CD8-positive, alpha-beta T cell (primary cell): ENCODE measurements at regions of chr16 and their contacts with region 1.

Region 1: GRCh38 chr16:87387942-87388817 is 4.0 kb upstream of the MAP1LC3B start:
- DNase-seq: peak; percentile 76 to 97 (median 86)
- ATAC-seq: peak; percentile 65
- H3K4me3 ChIP-seq: peak overlapping the region; percentile 4 to 13
- H3K4me3 Mint-ChIP-seq: peak overlapping the region; percentile 30
- H3K27ac ChIP-seq: peak overlapping the region; percentile 53 to 89
- H3K27ac Mint-ChIP-seq: peak overlapping the region; percentile 97
- H3K4me1 ChIP-seq: peaks cover 22% of the 10 kb centered on the region
- H3K4me1 Mint-ChIP-seq: peaks cover 38% of the 10 kb centered on the region
- H3K27me3 ChIP-seq: no peaks in the 10 kb centered on the region
- H3K27me3 Mint-ChIP-seq: no peaks in the 10 kb centered on the region
- CTCF ChIP-seq: no peak

Region 2: DNA sequence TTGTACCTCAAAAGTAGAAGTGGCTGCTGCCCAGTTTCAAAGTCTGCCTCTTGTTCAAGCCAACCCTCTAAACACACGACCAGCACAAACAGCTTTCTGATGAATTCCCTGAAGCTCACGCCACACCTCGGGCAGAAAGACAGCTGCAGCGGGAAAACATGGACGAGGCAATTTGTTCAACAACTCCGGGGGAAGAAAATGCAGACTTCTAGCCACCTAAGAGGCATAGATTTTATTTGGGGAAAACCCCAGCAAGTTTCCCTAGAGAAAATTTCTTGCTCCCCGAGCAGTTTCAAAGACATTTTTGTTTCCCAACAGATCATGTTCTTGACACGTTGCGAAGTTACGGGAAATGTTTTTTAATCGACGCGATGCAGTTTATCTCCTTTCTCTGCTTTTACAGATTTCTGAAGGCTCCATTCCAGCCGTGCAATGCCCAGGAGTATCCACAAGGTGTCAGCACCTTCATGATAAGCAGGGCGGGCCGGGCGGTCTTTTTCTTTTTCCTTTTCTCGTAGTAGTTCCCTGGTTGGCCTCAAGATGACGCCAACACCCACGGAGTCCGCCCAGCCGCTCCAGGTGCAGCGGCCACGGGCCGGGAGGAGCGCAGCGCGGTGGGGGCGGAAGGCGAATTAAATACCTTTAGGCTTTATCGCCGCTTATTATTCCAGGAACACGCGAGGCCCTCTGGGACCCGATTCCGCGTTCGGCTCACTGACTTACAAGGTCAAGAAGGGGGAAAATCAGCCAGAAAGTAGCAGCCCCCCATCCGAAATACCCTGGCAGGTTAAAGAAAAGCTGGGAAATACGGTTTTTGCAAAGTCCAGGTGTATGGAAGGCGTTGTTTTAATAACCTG is 824.5 kb before region 1 on chr16:
- CTCF ChIA-PET with region 1: no interaction called
- POLR2A ChIA-PET with region 1: no interaction called
- intact Hi-C with region 1: loop called in 1 of 2 experiments (anchors 5 kb)
- DNase-seq: peak; percentile 72 to 91 (median 86)
- ATAC-seq: peak; percentile 100
- H3K4me3 ChIP-seq: peak overlapping the region in 1 of 2 experiments; percentile 24
- H3K4me3 Mint-ChIP-seq: peak overlapping the region; percentile 62
- H3K27ac ChIP-seq: no peak overlapping the region
- H3K27ac Mint-ChIP-seq: no peak overlapping the region
- H3K4me1 ChIP-seq: peaks cover 22% of the 10 kb centered on the region
- H3K4me1 Mint-ChIP-seq: peaks cover 23% of the 10 kb centered on the region
- H3K27me3 ChIP-seq: peaks cover 18 to 25% of the 10 kb centered on the region in 2 experiments
- H3K27me3 Mint-ChIP-seq: peaks cover 52% of the 10 kb centered on the region
- CTCF ChIP-seq: peak; percentile 100

Region 3: GRCh38 chr16:87324411-87325275 is 63.5 kb before region 1 on chr16:
- CTCF ChIA-PET with region 1: interaction called, 32 read pairs
- POLR2A ChIA-PET with region 1: no interaction called
- intact Hi-C with region 1: no loop called
- DNase-seq: peak in 8 of 9 experiments; percentile 17 to 67 (median 56)
- ATAC-seq: peak; percentile 95
- H3K4me3 ChIP-seq: no peak overlapping the region
- H3K4me3 Mint-ChIP-seq: no peak overlapping the region
- H3K27ac ChIP-seq: no peak overlapping the region
- H3K27ac Mint-ChIP-seq: no peak overlapping the region
- H3K4me1 ChIP-seq: peaks cover 3% of the 10 kb centered on the region
- H3K4me1 Mint-ChIP-seq: peaks cover 7% of the 10 kb centered on the region
- H3K27me3 ChIP-seq: no peaks in the 10 kb centered on the region
- H3K27me3 Mint-ChIP-seq: no peaks in the 10 kb centered on the region
- CTCF ChIP-seq: peak; percentile 80

Region 4: GRCh38 chr16:87492721-87493607 is 104.8 kb after region 1 on chr16 and contains the start of gene ZCCHC14:
- CTCF ChIA-PET with region 1: interaction called, 3 read pairs
- POLR2A ChIA-PET with region 1: interaction called, 3 read pairs
- intact Hi-C with region 1: loop called (anchors 1 kb)
- DNase-seq: peak; percentile 97 to 99 (median 99)
- ATAC-seq: peak; percentile 92
- H3K4me3 ChIP-seq: peak within 1 kb of the TSS; percentile 70 to 71
- H3K4me3 Mint-ChIP-seq: peak within 1 kb of the TSS; percentile 89
- H3K27ac ChIP-seq: peak within 1 kb of the TSS; percentile 30 to 48
- H3K27ac Mint-ChIP-seq: peak within 1 kb of the TSS; percentile 82
- H3K4me1 ChIP-seq: peaks cover 41% of the 10 kb centered on the region
- H3K4me1 Mint-ChIP-seq: peaks cover 52% of the 10 kb centered on the region
- H3K27me3 ChIP-seq: no peaks in the 10 kb centered on the region
- H3K27me3 Mint-ChIP-seq: no peaks in the 10 kb centered on the region
- CTCF ChIP-seq: no peak
- total RNA-seq, gene ZCCHC14: 13.2 TPM

Region 5: GRCh38 chr16:87950765-87951549 is 562.8 kb after region 1 on chr16 and contains the start of gene BANP:
- CTCF ChIA-PET with region 1: no interaction called
- POLR2A ChIA-PET with region 1: interaction called, 5 read pairs
- intact Hi-C with region 1: loop called in 1 of 2 experiments (anchors 1 kb)
- DNase-seq: peak; percentile 92 to 100 (median 96)
- ATAC-seq: peak; percentile 93
- H3K4me3 ChIP-seq: peak within 1 kb of the TSS; percentile 72 to 98
- H3K4me3 Mint-ChIP-seq: peak within 1 kb of the TSS; percentile 97
- H3K27ac ChIP-seq: peak within 1 kb of the TSS; percentile 88 to 96
- H3K27ac Mint-ChIP-seq: peak within 1 kb of the TSS; percentile 99
- H3K4me1 ChIP-seq: peaks cover 37% of the 10 kb centered on the region
- H3K4me1 Mint-ChIP-seq: peaks cover 42% of the 10 kb centered on the region
- H3K27me3 ChIP-seq: no peaks in the 10 kb centered on the region
- H3K27me3 Mint-ChIP-seq: no peaks in the 10 kb centered on the region
- CTCF ChIP-seq: peak; percentile 41
- total RNA-seq, gene BANP: 55.3 to 60.6 TPM